Psoas muscle (tissue), 8 donors: ENCODE measurements at regions of chr5 and their contacts with region 1.

Region 1: GRCh38 chr5:171913987-171914273 is 92.5 kb downstream of the FBXW11 start:
- DNase-seq: no peak
- ATAC-seq: peak in 1 of 4 donors; percentile 58
- H3K4me3 ChIP-seq: no peak overlapping the region
- H3K27ac ChIP-seq: no peak overlapping the region
- H3K4me1 ChIP-seq: peaks cover 21% of the 10 kb centered on the region
- H3K27me3 ChIP-seq: no peaks in the 10 kb centered on the region
- CTCF ChIP-seq: no peak

Region 2: DNA sequence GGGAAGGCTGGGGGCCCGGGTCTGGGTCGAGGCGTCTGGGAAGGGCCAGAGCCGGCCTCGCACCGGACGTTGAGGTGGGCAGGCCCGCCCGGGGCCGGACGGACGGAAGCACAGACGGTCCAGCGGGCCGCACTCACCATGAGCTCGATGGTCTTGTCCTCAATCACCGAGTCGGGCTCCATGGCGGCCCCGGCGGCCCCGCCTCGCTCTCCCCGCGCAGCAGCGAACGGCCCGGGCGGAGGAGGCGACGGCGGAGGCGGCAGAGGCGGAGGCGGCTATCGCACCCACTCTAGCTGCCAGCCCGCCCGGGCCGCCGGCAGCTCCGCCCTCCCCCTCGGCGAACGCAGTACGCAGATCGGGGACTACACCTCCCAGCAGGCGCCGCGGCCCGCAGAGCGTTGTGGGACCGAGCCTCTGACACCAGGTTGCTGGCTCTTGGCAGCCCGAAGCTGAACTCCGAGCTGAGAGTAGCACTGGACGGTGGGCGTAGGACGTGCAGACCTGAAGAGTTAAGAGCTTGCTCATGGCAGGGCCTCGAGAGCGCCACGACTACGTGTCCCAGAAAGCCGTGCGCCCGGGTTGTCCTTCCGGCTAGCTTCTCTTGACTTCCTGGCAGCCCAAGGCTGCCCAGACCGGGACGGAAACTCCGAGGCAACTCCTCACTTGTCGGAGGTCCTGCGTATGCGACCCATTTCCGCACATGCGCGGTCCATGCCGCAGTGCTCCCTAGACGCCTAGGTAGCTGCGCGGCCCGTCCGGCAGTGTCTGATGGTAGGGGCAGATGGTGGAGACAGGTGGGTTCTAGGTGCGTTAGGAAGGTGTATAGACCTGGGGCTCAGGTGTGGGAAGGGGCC is 92.6 kb after region 1 on chr5 and contains the start of gene FBXW11:
- intact Hi-C with region 1: loop called in 1 of 2 experiments (anchors 10 kb)
- DNase-seq: peak; percentile 97 to 98
- ATAC-seq: peak; percentile 94 to 95 (median 94)
- H3K4me3 ChIP-seq: peak within 1 kb of the TSS; percentile 96
- H3K27ac ChIP-seq: peak within 1 kb of the TSS; percentile 98
- H3K4me1 ChIP-seq: peaks cover 39% of the 10 kb centered on the region
- H3K27me3 ChIP-seq: no peaks in the 10 kb centered on the region
- CTCF ChIP-seq: no peak
- total RNA-seq, gene FBXW11: 42.7 to 62.8 (median 55.5) TPM

Region 3: DNA sequence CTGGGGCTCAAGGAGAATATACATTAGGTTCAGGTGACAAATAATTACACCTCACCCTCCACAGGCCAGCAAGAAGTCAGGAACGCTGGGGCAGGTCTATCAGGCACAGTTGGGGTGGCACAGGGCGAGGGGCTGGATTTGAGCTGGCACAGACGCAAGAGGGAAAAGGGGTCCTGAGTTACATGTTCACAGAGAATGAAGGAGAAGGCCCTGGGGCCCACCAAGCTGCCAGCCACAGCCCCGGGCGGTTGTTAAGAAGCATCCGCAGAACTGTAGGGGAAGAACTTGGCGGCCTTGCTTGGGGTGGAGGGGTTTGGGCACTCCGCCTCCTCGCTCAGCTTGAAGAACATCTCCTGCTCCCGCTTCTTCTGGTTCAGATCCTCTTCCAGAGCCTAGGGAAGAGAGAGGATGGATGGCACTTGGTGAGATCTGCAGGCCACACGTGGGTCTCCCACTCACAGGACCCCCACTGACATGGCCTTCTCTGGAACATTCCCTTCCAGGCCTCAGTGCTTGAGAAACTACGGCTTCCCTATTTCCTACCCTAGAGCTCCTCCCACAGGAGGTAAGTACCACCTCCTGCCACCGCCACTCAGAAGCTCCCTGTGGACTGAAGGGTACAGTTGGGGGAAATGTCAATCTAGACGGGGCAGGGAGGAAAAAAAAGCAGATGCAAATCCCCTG is 130.8 kb after region 1 on chr5:
- intact Hi-C with region 1: loop called (anchors 1 to 5 kb)
- DNase-seq: no peak
- ATAC-seq: no peak
- H3K4me3 ChIP-seq: no peak overlapping the region
- H3K27ac ChIP-seq: no peak overlapping the region
- H3K4me1 ChIP-seq: peaks cover 5% of the 10 kb centered on the region
- H3K27me3 ChIP-seq: no peaks in the 10 kb centered on the region
- CTCF ChIP-seq: no peak